ENCODE measurements at regions of chr1 and their contacts with region 1.

Region 1: GRCh38 chr1:14602136-14602535 is 3.7 kb downstream of the KAZN start:
- DNase-seq: peak; percentile 14 to 88 (median 64)

Region 2: DNA sequence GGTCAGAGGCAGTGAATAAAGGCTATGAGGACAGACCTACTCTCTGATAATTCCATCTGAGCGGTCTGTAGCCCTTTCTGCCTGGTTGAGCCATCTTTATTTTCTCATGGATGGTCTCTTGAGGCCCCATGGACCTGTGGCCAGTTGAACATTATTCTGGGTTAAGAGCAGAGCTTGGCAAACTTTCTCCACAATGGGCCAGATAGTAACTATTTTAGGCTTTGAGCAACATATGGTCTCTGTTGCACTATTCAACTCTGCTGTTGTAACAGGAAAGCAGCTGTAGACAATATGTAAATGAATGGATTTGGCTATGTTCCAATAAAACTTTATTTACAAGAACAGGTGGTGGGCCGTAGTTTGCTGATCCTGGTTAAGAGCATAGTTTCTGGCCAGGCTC is 59.1 kb after region 1 on chr1:
- intact Hi-C with region 1: no loop called
- DNase-seq: no peak

Region 3: GRCh38 chr1:14672005-14672404 is 69.9 kb after region 1 on chr1:
- intact Hi-C with region 1: no loop called
- DNase-seq: no peak

Region 4: DNA sequence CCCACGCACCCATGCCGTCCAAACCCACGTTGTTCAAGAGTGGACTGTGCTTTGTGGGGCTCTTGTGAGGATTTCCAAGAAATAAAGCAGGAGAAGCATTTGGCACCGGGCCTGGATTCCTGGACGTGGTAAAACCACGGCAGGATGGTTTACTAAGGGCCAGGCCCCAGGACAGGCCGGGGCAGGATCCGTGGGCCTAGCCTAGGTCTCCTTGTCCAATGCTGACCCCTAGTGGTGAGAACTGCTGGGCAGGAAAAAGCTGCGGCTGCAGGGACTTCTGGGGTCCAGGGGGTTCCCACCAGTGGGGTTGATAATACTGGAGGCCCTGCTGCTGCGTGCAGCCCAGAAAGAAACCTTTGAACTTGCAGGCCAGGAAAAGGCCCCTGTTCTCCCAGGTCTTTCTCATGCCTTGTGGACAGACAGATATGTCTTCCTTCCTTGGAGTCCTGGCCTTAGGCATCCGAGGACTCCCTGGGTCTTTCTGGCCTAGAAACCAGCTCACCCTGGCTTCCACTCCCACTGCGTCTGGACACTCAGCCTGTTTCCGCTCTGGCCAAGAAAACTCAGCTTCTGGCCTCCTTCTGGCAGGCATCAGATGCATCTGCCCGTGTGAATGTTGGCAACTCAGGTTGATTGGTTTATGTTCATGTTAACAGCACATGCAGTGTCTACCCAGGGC is 444.5 kb after region 1 on chr1:
- intact Hi-C with region 1: loop called (anchors 10 kb)
- DNase-seq: peak; percentile 52 to 96 (median 83)